Activated T-helper 2 cell treated with anti-CD3 and anti-CD28 coated beads, Interferon-gamma antibody, Interleukin-2, Interleukin-4, amounts not matched to agents 10 μg/mL and 5 μg/mL and 100 μg/mL, durations not matched to agents 14 hours and 24 hours and 36 hours (primary cell): ENCODE measurements at regions of chr22 and their contacts with region 1.

Region 1: GRCh38 chr22:37267135-37267587 is 15.1 kb upstream of the CYTH4 start:
- DNase-seq: peak; percentile 71
- H3K4me3 Mint-ChIP-seq: peak overlapping the region; percentile 80
- H3K27ac Mint-ChIP-seq: peak overlapping the region; percentile 87
- H3K4me1 Mint-ChIP-seq: peaks cover 39% of the 10 kb centered on the region
- H3K27me3 Mint-ChIP-seq: peaks cover 5% of the 10 kb centered on the region

Region 2: GRCh38 chr22:37316875-37317371 is 49.8 kb after region 1 on chr22:
- intact Hi-C with region 1: no loop called
- DNase-seq: peak; percentile 63
- H3K4me3 Mint-ChIP-seq: no peak overlapping the region
- H3K27ac Mint-ChIP-seq: no peak overlapping the region
- H3K4me1 Mint-ChIP-seq: peaks cover 30% of the 10 kb centered on the region
- H3K27me3 Mint-ChIP-seq: peaks cover 12% of the 10 kb centered on the region

Region 3: GRCh38 chr22:37457093-37457893 is 190.1 kb after region 1 on chr22:
- intact Hi-C with region 1: loop called (anchors 10 kb)
- DNase-seq: peak; percentile 69
- H3K4me3 Mint-ChIP-seq: no peak overlapping the region
- H3K27ac Mint-ChIP-seq: no peak overlapping the region
- H3K4me1 Mint-ChIP-seq: peaks cover 7% of the 10 kb centered on the region
- H3K27me3 Mint-ChIP-seq: no peaks in the 10 kb centered on the region